Calu3 (cell line): ENCODE measurements at regions of chr9 and their contacts with region 1.

Region 1: GRCh38 chr9:28774416-28775235 is 1201.3 kb upstream of the C9orf72 start:
- DNase-seq: no peak
- H3K4me3 Mint-ChIP-seq: no peak overlapping the region
- H3K27ac Mint-ChIP-seq: no peak overlapping the region
- H3K4me1 Mint-ChIP-seq: no peaks in the 10 kb centered on the region
- H3K27me3 Mint-ChIP-seq: no peaks in the 10 kb centered on the region
- CTCF ChIP-seq: no peak

Region 2: GRCh38 chr9:29006628-29007027 is 232.0 kb after region 1 on chr9:
- CTCF ChIA-PET with region 1: no interaction called
- intact Hi-C with region 1: loop called (anchors 10 kb)
- DNase-seq: no peak
- H3K4me3 Mint-ChIP-seq: no peak overlapping the region
- H3K27ac Mint-ChIP-seq: no peak overlapping the region
- H3K4me1 Mint-ChIP-seq: no peaks in the 10 kb centered on the region
- H3K27me3 Mint-ChIP-seq: no peaks in the 10 kb centered on the region
- CTCF ChIP-seq: no peak

Region 3: GRCh38 chr9:29211580-29212396 is 437.2 kb after region 1 on chr9:
- CTCF ChIA-PET with region 1: interaction called, 7 read pairs
- intact Hi-C with region 1: loop called (anchors 2 kb)
- DNase-seq: peak; percentile 80
- H3K4me3 Mint-ChIP-seq: peak overlapping the region; percentile 67
- H3K27ac Mint-ChIP-seq: no peak overlapping the region
- H3K4me1 Mint-ChIP-seq: peaks cover 13% of the 10 kb centered on the region
- H3K27me3 Mint-ChIP-seq: no peaks in the 10 kb centered on the region
- CTCF ChIP-seq: peak; percentile 82